ENCODE measurements at regions of chrX and their contacts with region 1.

Region 1: GRCh38 chrX:46758906-46759644 is at the start of gene SLC9A7:
- DNase-seq: no peak
- H3K4me3 ChIP-seq: peak within 1 kb of the TSS; percentile 68
- H3K27me3 ChIP-seq: no peaks in the 10 kb centered on the region
- CTCF ChIP-seq: peak; percentile 78
- polyA plus RNA-seq, gene SLC9A7: 21.5 and 21.6 TPM in 2 replicates

Region 2: GRCh38 chrX:45811326-45811725 is 947.7 kb before region 1 on chrX:
- CTCF ChIA-PET with region 1: no interaction called
- POLR2A ChIA-PET with region 1: no interaction called
- DNase-seq: no peak
- H3K4me3 ChIP-seq: no peak overlapping the region
- H3K27me3 ChIP-seq: no peaks in the 10 kb centered on the region
- CTCF ChIP-seq: no peak

Region 3: DNA sequence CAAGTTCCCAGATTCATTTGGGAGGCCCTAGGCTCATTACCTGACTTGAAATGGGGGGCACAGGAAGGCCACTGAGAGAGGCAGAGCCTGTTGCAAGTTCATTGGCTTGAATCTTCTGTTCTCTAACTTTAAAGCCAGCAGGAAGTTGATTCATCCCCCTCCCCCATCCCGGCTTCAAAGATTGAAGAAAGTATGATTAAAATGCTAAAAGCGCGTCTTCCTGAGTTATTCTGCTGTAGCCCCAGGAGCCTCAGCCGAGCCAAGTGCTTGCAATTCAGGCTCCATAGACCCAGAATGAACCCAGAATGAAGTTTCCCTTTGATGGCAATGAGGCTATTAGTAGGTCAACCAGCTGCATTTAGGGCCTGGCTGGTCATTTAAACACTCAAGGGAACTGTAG is 170.8 kb before region 1 on chrX:
- CTCF ChIA-PET with region 1: no interaction called
- POLR2A ChIA-PET with region 1: no interaction called
- DNase-seq: no peak
- H3K4me3 ChIP-seq: no peak overlapping the region
- H3K27me3 ChIP-seq: no peaks in the 10 kb centered on the region
- CTCF ChIP-seq: no peak

Region 4: DNA sequence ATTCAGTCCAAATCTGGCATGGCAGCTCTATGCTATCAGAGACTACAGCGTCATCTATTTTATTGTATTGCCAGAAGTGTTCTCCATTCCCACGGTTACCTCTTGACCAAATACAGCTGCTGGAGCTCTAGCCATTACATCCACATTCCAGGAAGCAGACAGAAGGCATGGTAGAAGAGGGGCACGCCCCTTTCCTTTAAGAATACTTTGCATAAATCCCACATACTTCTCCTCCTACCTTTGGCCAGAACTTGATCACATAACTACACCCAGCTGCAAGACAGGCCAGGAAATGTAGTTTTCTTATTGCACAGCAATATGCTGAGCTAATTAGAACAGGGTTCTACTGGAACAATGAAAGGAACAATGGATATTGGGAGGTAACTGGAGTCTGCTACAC is 15.1 kb before region 1 on chrX:
- CTCF ChIA-PET with region 1: no interaction called
- POLR2A ChIA-PET with region 1: no interaction called
- DNase-seq: no peak
- H3K4me3 ChIP-seq: no peak overlapping the region
- H3K27me3 ChIP-seq: no peaks in the 10 kb centered on the region
- CTCF ChIP-seq: no peak

Region 5: GRCh38 chrX:46796574-46797191 is 37.6 kb after region 1 on chrX:
- CTCF ChIA-PET with region 1: interaction called, 54 read pairs
- POLR2A ChIA-PET with region 1: no interaction called
- DNase-seq: no peak
- H3K4me3 ChIP-seq: no peak overlapping the region
- H3K27me3 ChIP-seq: no peaks in the 10 kb centered on the region
- CTCF ChIP-seq: peak; percentile 72

Region 6: GRCh38 chrX:46823491-46823890 is 64.4 kb after region 1 on chrX:
- CTCF ChIA-PET with region 1: no interaction called
- POLR2A ChIA-PET with region 1: no interaction called
- DNase-seq: no peak
- H3K4me3 ChIP-seq: no peak overlapping the region
- H3K27me3 ChIP-seq: no peaks in the 10 kb centered on the region
- CTCF ChIP-seq: no peak

Measured in BJ (cell line).